ENCODE measurements at regions of chr3 and their contacts with region 1.

Region 1: DNA sequence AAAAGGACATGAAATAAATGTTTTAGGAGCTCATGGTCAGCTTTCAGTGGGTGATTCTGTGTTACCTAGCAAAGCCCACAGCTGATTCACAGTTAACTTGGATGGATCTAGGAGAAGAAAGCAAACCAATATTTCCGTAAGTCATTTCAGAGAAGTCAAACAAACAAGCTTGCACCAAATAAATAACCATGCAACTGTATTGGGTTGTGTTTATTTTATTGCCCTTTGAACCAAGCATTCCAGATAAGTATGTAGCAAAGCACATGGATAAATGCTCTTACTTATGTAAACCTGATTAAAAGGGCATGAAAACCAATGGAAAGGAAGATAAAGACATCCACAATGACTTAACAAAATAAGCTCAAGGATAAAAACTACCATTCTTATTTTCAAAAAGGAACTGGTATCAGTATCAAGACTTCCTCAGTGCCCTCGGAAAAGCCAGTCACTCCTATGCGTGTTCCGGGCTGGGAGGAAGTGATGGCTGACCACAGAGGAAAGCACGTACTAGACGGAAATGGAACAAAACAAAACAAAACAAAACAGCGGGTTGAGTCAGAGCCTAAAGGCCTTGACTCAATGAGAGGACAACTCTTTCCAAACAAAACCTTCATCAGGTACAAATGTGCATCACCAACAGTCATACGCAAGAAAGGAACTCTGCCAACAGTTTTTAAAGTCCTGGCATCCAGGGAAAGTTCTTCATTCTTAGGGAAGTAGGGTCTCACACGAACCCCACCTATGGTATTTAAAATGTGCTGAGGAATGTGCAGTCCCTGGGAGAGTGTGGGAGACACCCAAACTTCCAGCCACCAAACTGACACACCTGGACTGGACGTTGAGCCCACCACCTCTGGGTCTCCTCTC is 103.3 kb downstream of the SNRK start:
- DNase-seq: peak; percentile 33 to 88 (median 73)
- ATAC-seq: peak; percentile 88 to 97
- H3K4me3 Mint-ChIP-seq: peak overlapping the region; percentile 12 to 84 (median 72)
- H3K27ac Mint-ChIP-seq: peak overlapping the region; percentile 88 to 98 (median 94)
- H3K4me1 Mint-ChIP-seq: peaks cover 43 to 86% (median 67%) of the 10 kb centered on the region in 4 donors
- H3K27me3 Mint-ChIP-seq: no peaks in the 10 kb centered on the region

Region 2: GRCh38 chr3:43378066-43378935 is 11.3 kb before region 1 on chr3:
- POLR2A ChIA-PET with region 1: interaction called, 24 read pairs
- DNase-seq: peak; percentile 48 to 86 (median 72)
- ATAC-seq: peak; percentile 97 to 98
- H3K4me3 Mint-ChIP-seq: peak overlapping the region in 3 of 10 donors; percentile 24 to 29 (median 26)
- H3K27ac Mint-ChIP-seq: peak overlapping the region; percentile 70 to 91 (median 82)
- H3K4me1 Mint-ChIP-seq: peaks cover 18 to 37% (median 25%) of the 10 kb centered on the region in 4 donors
- H3K27me3 Mint-ChIP-seq: no peaks in the 10 kb centered on the region

Region 3: DNA sequence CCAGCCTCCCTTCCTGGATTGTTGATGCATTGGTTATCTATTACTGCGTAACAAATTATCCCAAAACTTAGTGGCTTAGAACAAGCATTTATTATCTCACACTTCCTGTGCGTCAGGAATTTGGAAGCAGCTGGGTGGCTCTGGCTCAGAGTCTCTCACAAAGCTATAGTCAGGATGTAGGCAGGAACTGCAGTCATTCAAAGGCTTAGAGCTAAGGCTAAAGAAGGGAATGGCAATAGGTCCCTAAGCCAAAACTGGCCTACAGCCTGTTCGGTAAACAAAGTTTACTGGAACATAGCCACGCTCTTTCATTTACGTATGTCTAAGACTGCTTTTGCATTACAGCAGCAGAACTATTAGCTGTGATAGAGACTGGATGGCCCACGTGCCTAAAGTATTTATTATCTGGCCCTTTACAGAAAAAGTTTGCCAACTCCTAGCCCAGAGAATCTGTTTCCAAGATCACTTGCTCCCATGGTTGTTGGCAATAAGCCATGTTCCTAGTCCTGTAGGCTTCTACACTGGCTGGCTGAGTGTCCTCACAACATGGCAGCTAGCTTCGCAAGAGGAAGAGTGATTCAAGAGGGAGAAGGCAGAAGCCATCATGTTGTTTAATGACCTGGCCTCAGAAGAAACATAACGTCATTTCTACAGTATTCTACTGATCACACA is 29.1 kb after region 1 on chr3:
- POLR2A ChIA-PET with region 1: no interaction called
- DNase-seq: no peak
- ATAC-seq: no peak
- H3K4me3 Mint-ChIP-seq: no peak overlapping the region
- H3K27ac Mint-ChIP-seq: no peak overlapping the region
- H3K4me1 Mint-ChIP-seq: peaks cover 4 to 7% (median 5%) of the 10 kb centered on the region in 4 donors
- H3K27me3 Mint-ChIP-seq: no peaks in the 10 kb centered on the region